ENCODE measurements at regions of chr10 and their contacts with region 1.

Region 1: GRCh38 chr10:78211561-78212051 is 177.9 kb downstream of the RPS24 start:
- DNase-seq: peak in 1 of 2 donors; percentile 23
- ATAC-seq: peak in 1 of 4 donors; percentile 39
- H3K4me3 ChIP-seq: no peak overlapping the region
- H3K27ac ChIP-seq: no peak overlapping the region
- H3K4me1 ChIP-seq: peaks cover 18% of the 10 kb centered on the region
- H3K27me3 ChIP-seq: no peaks in the 10 kb centered on the region
- CTCF ChIP-seq: peak; percentile 48

Region 2: DNA sequence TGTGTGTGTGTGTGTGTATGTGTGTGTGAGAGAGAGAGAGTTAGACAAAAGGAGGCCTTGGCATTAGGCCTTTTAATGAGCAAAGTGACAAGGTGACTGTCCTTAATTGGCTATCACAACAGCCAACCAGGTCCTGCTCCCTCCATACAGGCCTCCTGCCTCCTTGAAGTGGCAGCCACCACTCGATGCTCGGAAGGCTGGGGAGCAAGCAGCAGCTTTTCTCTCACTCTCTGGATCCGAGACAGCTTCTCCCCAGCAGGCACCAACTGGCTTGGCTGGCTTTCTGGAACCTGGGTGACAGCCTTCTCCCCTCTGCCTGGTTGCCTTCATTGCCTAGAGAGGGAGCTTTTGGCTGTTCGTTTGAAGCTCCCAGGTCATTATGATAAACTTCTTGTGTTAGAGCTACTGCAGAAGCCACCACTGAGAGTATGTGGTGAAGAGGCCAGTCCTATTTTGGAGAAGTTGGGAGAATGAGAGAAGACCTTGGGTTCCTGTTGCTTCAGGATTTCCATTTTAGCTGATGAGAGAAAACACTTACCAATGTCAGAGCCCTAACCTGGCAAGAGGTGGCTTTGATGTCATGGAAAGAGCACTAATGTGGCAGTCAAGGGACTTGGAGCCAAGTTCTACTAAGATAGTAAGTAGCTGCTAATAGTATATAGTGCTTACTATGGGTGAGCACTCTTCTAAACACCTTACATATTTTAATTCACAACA is 140.3 kb before region 1 on chr10:
- intact Hi-C with region 1: no loop called
- DNase-seq: no peak
- ATAC-seq: no peak
- H3K4me3 ChIP-seq: no peak overlapping the region
- H3K27ac ChIP-seq: no peak overlapping the region
- H3K4me1 ChIP-seq: no peaks in the 10 kb centered on the region
- H3K27me3 ChIP-seq: no peaks in the 10 kb centered on the region
- CTCF ChIP-seq: no peak

Region 3: DNA sequence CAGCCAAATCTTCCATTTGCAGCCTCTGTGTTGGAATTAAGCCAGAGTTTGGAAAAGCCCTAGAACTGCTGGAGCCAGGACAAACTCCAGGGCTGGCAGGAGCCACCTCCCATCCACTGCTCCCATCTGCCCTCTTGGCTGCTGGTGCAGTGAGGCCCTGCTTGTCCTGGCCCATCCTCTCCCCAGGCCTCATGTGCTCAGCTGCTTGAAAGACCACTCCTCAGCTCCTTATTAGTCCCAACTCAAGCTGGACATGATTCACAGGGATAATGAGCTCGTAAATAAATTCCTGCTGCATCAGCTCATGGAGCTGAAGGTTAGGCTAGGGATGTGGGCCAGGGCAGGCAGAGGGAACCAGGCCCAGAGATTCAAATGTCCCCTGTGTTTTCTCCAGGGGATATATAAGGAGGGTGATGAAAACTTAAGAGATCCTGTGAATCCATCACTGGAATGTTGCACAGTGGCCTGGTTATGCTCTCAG is 104.9 kb after region 1 on chr10:
- intact Hi-C with region 1: loop called in 1 of 2 experiments (anchors 5 kb)
- DNase-seq: no peak
- ATAC-seq: peak in 3 of 4 donors; percentile 43 to 65 (median 56)
- H3K4me3 ChIP-seq: no peak overlapping the region
- H3K27ac ChIP-seq: no peak overlapping the region
- H3K4me1 ChIP-seq: peaks cover 5% of the 10 kb centered on the region
- H3K27me3 ChIP-seq: no peaks in the 10 kb centered on the region
- CTCF ChIP-seq: no peak

Region 4: DNA sequence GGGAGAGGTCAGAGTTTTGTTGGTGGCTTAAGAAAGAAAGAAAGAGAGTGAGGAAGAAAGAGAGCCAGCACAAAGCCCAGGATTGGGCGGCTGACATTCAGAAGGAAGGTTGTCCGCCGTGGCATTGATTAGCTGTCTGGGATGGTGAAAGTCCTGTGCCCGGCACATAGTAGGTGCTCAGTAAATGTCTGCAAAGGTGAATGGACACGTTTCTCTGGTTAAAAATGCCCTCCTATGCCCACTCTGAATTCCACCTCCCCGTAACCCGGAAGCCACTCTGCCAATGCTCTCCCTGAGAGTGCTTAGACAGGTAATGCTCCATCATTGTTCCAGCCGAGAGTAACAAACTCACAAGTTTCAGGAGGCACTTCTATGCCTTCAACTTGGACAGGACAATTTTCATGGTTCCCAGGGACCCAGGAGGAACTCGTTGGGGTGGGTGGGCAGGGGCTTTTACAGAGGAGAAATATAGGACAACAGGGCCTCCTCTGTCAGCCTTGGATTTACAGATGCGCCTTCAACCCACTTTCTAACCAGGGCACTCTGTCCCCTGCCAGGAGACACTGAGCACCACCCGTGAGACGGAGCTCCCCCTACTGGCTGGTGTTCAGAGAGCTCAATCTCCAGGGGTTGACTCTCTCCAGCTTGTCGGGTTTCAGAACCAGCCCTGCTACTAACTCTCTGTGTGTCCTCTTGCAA is 445.7 kb after region 1 on chr10:
- intact Hi-C with region 1: loop called (anchors 5 to 10 kb)
- DNase-seq: peak; percentile 76 to 87
- ATAC-seq: peak; percentile 89 to 97 (median 96)
- H3K4me3 ChIP-seq: no peak overlapping the region
- H3K27ac ChIP-seq: no peak overlapping the region
- H3K4me1 ChIP-seq: no peaks in the 10 kb centered on the region
- H3K27me3 ChIP-seq: peaks cover 0 to 11% (median 0%) of the 10 kb centered on the region in 3 donors
- CTCF ChIP-seq: peak; percentile 73

Measured in psoas muscle (tissue), 8 donors.